Activated CD4-positive, alpha-beta T cell treated with anti-CD3 and anti-CD28 coated beads for 36 hours (primary cell): ENCODE measurements at regions of chr17 and their contacts with region 1.

Region 1: GRCh38 chr17:19977311-19978208 is at the start of gene AKAP10:
- DNase-seq: peak; percentile 98
- ATAC-seq: peak; percentile 85
- H3K4me3 Mint-ChIP-seq: peak within 1 kb of the TSS; percentile 90
- H3K27ac Mint-ChIP-seq: peak within 1 kb of the TSS; percentile 98
- H3K4me1 Mint-ChIP-seq: peaks cover 48% of the 10 kb centered on the region
- H3K27me3 Mint-ChIP-seq: no peaks in the 10 kb centered on the region
- total RNA-seq, gene AKAP10: 31.6 to 35.9 TPM

Region 2: DNA sequence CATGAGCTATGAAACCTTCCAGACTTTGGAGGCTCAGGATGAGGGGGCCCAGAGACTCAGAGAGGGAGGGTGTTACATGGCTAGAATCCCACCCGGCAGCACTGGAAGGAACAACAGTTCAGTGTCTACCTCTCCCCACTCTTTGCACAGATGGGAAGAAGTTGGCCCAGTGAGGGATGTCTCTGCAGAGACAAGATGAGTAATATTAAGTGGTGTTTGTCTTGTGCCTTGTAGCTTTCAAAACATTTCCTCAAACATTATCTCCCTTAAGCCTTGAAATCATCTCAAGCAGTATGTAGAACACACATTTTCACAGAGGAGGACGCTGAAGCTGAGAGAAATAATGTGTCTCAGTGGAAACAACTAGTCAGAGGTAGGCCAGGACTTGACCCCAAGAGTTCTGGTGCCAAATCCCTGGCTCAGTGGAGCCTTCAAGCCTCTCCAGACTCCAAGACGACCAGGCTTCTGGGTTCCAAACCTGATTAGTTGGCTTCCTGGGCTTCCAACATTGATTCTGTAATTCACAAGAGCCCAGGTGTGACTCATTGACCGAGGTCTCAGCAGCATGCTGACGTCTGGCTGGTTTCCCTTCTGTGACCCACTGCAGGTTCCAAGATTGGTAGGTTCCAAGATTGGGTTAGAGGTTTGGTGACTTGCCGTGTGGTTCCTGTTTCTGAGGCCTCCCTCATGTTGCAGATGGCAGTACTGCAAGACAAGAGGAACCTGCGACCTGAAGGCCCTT is 559.1 kb before region 1 on chr17:
- CTCF ChIA-PET with region 1: no interaction called
- POLR2A ChIA-PET with region 1: no interaction called
- intact Hi-C with region 1: no loop called
- DNase-seq: peak; percentile 60
- ATAC-seq: peak; percentile 95
- H3K4me3 Mint-ChIP-seq: no peak overlapping the region
- H3K27ac Mint-ChIP-seq: no peak overlapping the region
- H3K4me1 Mint-ChIP-seq: peaks cover 15% of the 10 kb centered on the region
- H3K27me3 Mint-ChIP-seq: no peaks in the 10 kb centered on the region

Region 3: GRCh38 chr17:19648475-19649406 is 328.8 kb before region 1 on chr17 and contains the start of gene ALDH3A2:
- CTCF ChIA-PET with region 1: no interaction called
- POLR2A ChIA-PET with region 1: no interaction called
- intact Hi-C with region 1: loop called in 1 of 2 experiments (anchors 2 kb)
- DNase-seq: peak; percentile 97
- ATAC-seq: peak; percentile 94
- H3K4me3 Mint-ChIP-seq: peak within 1 kb of the TSS; percentile 79
- H3K27ac Mint-ChIP-seq: peak within 1 kb of the TSS; percentile 87
- H3K4me1 Mint-ChIP-seq: peaks cover 38% of the 10 kb centered on the region
- H3K27me3 Mint-ChIP-seq: peaks cover 1% of the 10 kb centered on the region
- total RNA-seq, gene ALDH3A2: 18.5 to 23.9 TPM

Region 4: GRCh38 chr17:19940722-19941464 is 36.7 kb before region 1 on chr17:
- CTCF ChIA-PET with region 1: no interaction called
- POLR2A ChIA-PET with region 1: no interaction called
- intact Hi-C with region 1: no loop called
- DNase-seq: no peak
- ATAC-seq: no peak
- H3K4me3 Mint-ChIP-seq: no peak overlapping the region
- H3K27ac Mint-ChIP-seq: peak overlapping the region; percentile 4
- H3K4me1 Mint-ChIP-seq: peaks cover 34% of the 10 kb centered on the region
- H3K27me3 Mint-ChIP-seq: no peaks in the 10 kb centered on the region

Region 5: GRCh38 chr17:19992803-19993713 is 15.5 kb after region 1 on chr17:
- CTCF ChIA-PET with region 1: interaction called, 13 read pairs
- POLR2A ChIA-PET with region 1: interaction called, 8 read pairs
- intact Hi-C with region 1: no loop called
- DNase-seq: peak; percentile 88
- ATAC-seq: peak; percentile 100
- H3K4me3 Mint-ChIP-seq: no peak overlapping the region
- H3K27ac Mint-ChIP-seq: no peak overlapping the region
- H3K4me1 Mint-ChIP-seq: peaks cover 6% of the 10 kb centered on the region
- H3K27me3 Mint-ChIP-seq: peaks cover 2% of the 10 kb centered on the region

Region 6: GRCh38 chr17:20155258-20156195 is 178.0 kb after region 1 on chr17:
- CTCF ChIA-PET with region 1: no interaction called
- POLR2A ChIA-PET with region 1: no interaction called
- intact Hi-C with region 1: loop called in 1 of 2 experiments (anchors 1 kb)
- DNase-seq: peak; percentile 96
- ATAC-seq: peak; percentile 88
- H3K4me3 Mint-ChIP-seq: no peak overlapping the region
- H3K27ac Mint-ChIP-seq: no peak overlapping the region
- H3K4me1 Mint-ChIP-seq: peaks cover 4% of the 10 kb centered on the region
- H3K27me3 Mint-ChIP-seq: peaks cover 5% of the 10 kb centered on the region